Naive thymus-derived CD4-positive, alpha-beta T cell (primary cell): ENCODE measurements at regions of chr2 and their contacts with region 1.

Region 1: GRCh38 chr2:181483876-181484275 is 26.7 kb downstream of the ITGA4 start:
- DNase-seq: no peak
- ATAC-seq: no peak
- H3K4me3 ChIP-seq: no peak overlapping the region
- H3K4me3 Mint-ChIP-seq: no peak overlapping the region
- H3K27ac ChIP-seq: no peak overlapping the region
- H3K27ac Mint-ChIP-seq: peak overlapping the region in 3 of 9 donors; percentile 4 to 10 (median 9)
- H3K4me1 ChIP-seq: no peaks in the 10 kb centered on the region
- H3K4me1 Mint-ChIP-seq: peaks cover 3 to 21% (median 4%) of the 10 kb centered on the region in 7 donors
- H3K27me3 ChIP-seq: no peaks in the 10 kb centered on the region
- H3K27me3 Mint-ChIP-seq: no peaks in the 10 kb centered on the region

Region 2: GRCh38 chr2:180618570-180618969 is 865.3 kb before region 1 on chr2:
- CTCF ChIA-PET with region 1: no interaction called
- POLR2A ChIA-PET with region 1: no interaction called
- intact Hi-C with region 1: no loop called
- DNase-seq: no peak
- ATAC-seq: no peak
- H3K4me3 ChIP-seq: no peak overlapping the region
- H3K4me3 Mint-ChIP-seq: no peak overlapping the region
- H3K27ac ChIP-seq: no peak overlapping the region
- H3K27ac Mint-ChIP-seq: no peak overlapping the region
- H3K4me1 ChIP-seq: no peaks in the 10 kb centered on the region
- H3K4me1 Mint-ChIP-seq: peaks cover 0 to 4% (median 0%) of the 10 kb centered on the region in 7 donors
- H3K27me3 ChIP-seq: no peaks in the 10 kb centered on the region
- H3K27me3 Mint-ChIP-seq: peaks cover 2 to 30% (median 13%) of the 10 kb centered on the region in 5 donors

Region 3: DNA sequence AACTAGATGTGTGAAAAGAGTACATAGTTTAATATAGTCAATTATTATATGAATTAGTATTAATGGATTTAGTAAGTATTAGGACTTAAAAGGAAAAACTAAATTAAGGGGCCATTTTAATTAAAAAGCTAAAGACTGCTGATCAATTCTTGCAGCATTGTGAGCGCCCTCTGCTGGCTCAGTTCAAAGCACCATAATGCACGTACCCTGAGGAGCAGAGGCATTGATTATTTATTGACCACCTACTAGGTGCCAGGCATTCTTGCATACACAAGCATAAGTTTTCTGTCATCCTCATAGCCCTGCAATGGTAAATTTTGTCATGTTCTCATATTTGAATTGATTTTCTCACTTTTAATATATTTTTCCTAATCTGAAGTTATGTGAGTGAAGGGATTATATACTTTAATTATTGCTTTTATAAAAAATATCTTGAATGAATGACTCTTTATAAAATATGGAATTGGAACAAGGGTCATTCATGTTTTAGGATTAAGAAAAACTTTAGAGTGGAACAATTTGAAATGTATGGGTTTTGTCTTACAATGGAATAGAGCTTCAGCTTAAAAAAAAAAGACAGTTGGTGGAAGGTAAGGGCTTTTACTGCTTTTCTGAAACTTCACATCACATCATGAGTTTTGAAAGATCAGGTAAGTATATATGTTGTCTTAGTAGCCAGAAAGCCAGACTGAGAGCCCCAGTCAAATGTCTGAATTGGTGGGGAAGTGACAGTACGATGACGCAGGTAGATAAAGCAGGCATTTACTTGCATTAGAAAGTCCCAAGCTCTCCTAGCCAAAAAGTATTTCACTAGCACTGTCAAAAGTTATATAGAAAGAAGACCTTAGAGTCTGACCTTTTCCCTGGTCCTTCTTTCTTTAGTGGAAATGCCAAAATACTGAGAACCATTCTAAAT is 17.0 kb before region 1 on chr2:
- CTCF ChIA-PET with region 1: interaction called, 3 read pairs
- POLR2A ChIA-PET with region 1: no interaction called
- intact Hi-C with region 1: loop called in 1 of 2 experiments (anchors 2 kb)
- DNase-seq: peak; percentile 53 to 69 (median 61)
- ATAC-seq: peak; percentile 68
- H3K4me3 ChIP-seq: no peak overlapping the region
- H3K4me3 Mint-ChIP-seq: peak overlapping the region in 9 of 10 donors; percentile 49 to 76 (median 65)
- H3K27ac ChIP-seq: peak overlapping the region; percentile 65
- H3K27ac Mint-ChIP-seq: peak overlapping the region; percentile 59 to 95 (median 87)
- H3K4me1 ChIP-seq: peaks cover 53 to 71% of the 10 kb centered on the region in 2 donors
- H3K4me1 Mint-ChIP-seq: peaks cover 55 to 92% (median 90%) of the 10 kb centered on the region in 7 donors
- H3K27me3 ChIP-seq: no peaks in the 10 kb centered on the region
- H3K27me3 Mint-ChIP-seq: no peaks in the 10 kb centered on the region

Region 4: GRCh38 chr2:181499231-181499630 is 15.4 kb after region 1 on chr2:
- CTCF ChIA-PET with region 1: no interaction called
- POLR2A ChIA-PET with region 1: no interaction called
- intact Hi-C with region 1: loop called (anchors 1 to 2 kb)
- DNase-seq: no peak
- ATAC-seq: no peak
- H3K4me3 ChIP-seq: no peak overlapping the region
- H3K4me3 Mint-ChIP-seq: no peak overlapping the region
- H3K27ac ChIP-seq: no peak overlapping the region
- H3K27ac Mint-ChIP-seq: peak overlapping the region in 1 of 9 donors; percentile 37
- H3K4me1 ChIP-seq: no peaks in the 10 kb centered on the region
- H3K4me1 Mint-ChIP-seq: peaks cover 0 to 6% (median 0%) of the 10 kb centered on the region in 7 donors
- H3K27me3 ChIP-seq: no peaks in the 10 kb centered on the region
- H3K27me3 Mint-ChIP-seq: no peaks in the 10 kb centered on the region

Region 5: GRCh38 chr2:181517685-181518301 is 33.9 kb after region 1 on chr2:
- CTCF ChIA-PET with region 1: no interaction called
- POLR2A ChIA-PET with region 1: no interaction called
- intact Hi-C with region 1: loop called (anchors 5 kb)
- DNase-seq: peak in 1 of 9 donors; percentile 11
- ATAC-seq: peak; percentile 44
- H3K4me3 ChIP-seq: no peak overlapping the region
- H3K4me3 Mint-ChIP-seq: peak overlapping the region in 5 of 10 donors; percentile 23 to 67 (median 45)
- H3K27ac ChIP-seq: no peak overlapping the region
- H3K27ac Mint-ChIP-seq: peak overlapping the region in 8 of 9 donors; percentile 13 to 83 (median 62)
- H3K4me1 ChIP-seq: peaks cover 24 to 32% of the 10 kb centered on the region in 2 donors
- H3K4me1 Mint-ChIP-seq: peaks cover 20 to 55% (median 50%) of the 10 kb centered on the region in 7 donors
- H3K27me3 ChIP-seq: no peaks in the 10 kb centered on the region
- H3K27me3 Mint-ChIP-seq: no peaks in the 10 kb centered on the region

Region 6: DNA sequence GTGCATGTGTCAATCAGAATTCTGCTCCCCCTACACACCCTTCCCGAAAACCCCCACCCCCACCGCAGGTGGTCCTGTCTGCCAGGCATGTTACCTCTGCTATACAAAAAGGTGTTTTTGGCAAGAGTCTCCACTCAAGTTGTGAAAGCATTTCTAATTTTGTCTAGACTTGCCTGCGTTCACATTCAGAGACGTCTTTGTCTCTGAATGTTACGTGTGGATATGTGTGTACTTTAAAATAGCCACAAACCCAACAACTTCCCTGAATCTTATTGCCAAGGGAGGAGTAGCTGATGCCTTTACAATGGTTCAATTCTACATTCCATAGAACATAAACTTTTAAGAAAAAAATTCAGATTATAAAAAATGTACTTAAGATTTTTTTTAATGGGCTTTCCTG is 39.9 kb after region 1 on chr2:
- CTCF ChIA-PET with region 1: no interaction called
- POLR2A ChIA-PET with region 1: no interaction called
- intact Hi-C with region 1: loop called (anchors 5 kb)
- DNase-seq: no peak
- ATAC-seq: no peak
- H3K4me3 ChIP-seq: no peak overlapping the region
- H3K4me3 Mint-ChIP-seq: no peak overlapping the region
- H3K27ac ChIP-seq: no peak overlapping the region
- H3K27ac Mint-ChIP-seq: peak overlapping the region in 1 of 9 donors; percentile 46
- H3K4me1 ChIP-seq: no peaks in the 10 kb centered on the region
- H3K4me1 Mint-ChIP-seq: peaks cover 0 to 6% (median 0%) of the 10 kb centered on the region in 7 donors
- H3K27me3 ChIP-seq: no peaks in the 10 kb centered on the region
- H3K27me3 Mint-ChIP-seq: no peaks in the 10 kb centered on the region